ENCODE measurements at regions of chr6 and their contacts with region 1.

Region 1: GRCh38 chr6:17923401-17923863 is 64.0 kb downstream of the KIF13A start:
- DNase-seq: no peak
- ATAC-seq: 0 out of 2 replicates have a peak, but pooled peaks have one; percentile 27
- H3K4me3 ChIP-seq: no peak overlapping the region
- H3K27ac ChIP-seq: peak overlapping the region; percentile 37; the same call in 1 of the 2 replicates
- H3K4me1 ChIP-seq: peaks cover 26% of the 10 kb centered on the region
- H3K27me3 ChIP-seq: no peaks in the 10 kb centered on the region
- CTCF ChIP-seq: no peak
- POLR2A ChIP-seq: no peak
- RAD21 ChIP-seq: no peak

Region 2: DNA sequence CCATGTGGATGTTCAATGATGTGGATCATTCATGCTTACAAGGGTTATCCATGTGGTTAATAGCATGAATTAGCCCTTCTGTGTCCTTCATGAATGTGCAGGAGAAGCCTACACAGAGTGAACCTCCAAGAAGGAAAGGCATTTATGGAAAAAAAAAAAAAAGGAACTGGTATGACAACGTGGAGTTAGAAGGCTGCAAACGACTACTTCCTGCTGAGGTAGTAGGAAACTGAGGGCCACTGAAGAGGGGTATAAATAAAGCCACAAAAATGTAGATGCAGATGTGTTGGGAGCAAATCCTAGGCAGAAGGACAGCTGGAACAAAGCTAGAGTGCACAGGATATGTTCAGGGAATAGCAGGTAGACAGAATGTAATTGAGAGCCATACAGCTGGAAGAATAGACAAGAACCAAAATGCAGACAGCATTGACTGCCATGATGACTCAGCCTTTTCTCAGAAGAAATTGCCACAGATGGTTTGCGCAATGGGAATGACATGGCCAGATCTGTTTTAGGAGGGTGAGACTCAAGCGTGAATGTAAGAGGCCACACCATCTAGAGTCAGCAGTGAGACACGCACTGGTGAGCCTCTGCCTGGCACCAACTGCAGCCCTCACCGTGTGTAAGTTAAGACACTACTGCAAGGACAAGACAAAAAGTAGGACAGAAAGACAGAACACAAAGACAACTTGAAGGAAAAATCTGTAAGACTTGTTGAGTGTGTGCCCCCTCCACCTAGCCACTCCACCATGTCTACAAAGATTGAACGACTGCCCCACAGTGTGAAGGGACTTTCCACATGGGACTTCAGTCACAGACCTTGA is 15.8 kb before region 1 on chr6:
- CTCF ChIA-PET with region 1: no interaction called
- POLR2A ChIA-PET with region 1: no interaction called
- dilution Hi-C with region 1: no loop called
- in situ Hi-C with region 1: no loop called
- intact Hi-C with region 1: loop called (anchors 2 kb)
- DNase-seq: peak; percentile 100
- ATAC-seq: peak; percentile 92
- H3K4me3 ChIP-seq: no peak overlapping the region
- H3K27ac ChIP-seq: peak overlapping the region; percentile 87
- H3K4me1 ChIP-seq: peaks cover 25% of the 10 kb centered on the region
- H3K27me3 ChIP-seq: no peaks in the 10 kb centered on the region
- CTCF ChIP-seq: peak; percentile 44
- POLR2A ChIP-seq: no peak
- RAD21 ChIP-seq: peak; percentile 60

Region 3: GRCh38 chr6:18016133-18016532 is 92.7 kb after region 1 on chr6:
- CTCF ChIA-PET with region 1: no interaction called
- POLR2A ChIA-PET with region 1: no interaction called
- dilution Hi-C with region 1: no loop called
- in situ Hi-C with region 1: no loop called
- intact Hi-C with region 1: no loop called
- DNase-seq: no peak
- ATAC-seq: no peak
- H3K4me3 ChIP-seq: no peak overlapping the region
- H3K27ac ChIP-seq: no peak overlapping the region
- H3K4me1 ChIP-seq: no peaks in the 10 kb centered on the region
- H3K27me3 ChIP-seq: 0 out of 2 replicates have a peak, but pooled peaks cover 2% of the 10 kb centered on the region
- CTCF ChIP-seq: no peak
- POLR2A ChIP-seq: no peak
- RAD21 ChIP-seq: no peak

Measured in IMR-90 (cell line).